ENCODE measurements at regions of chr17 and their contacts with region 1.

Region 1: GRCh38 chr17:44522883-44523671 is 19.9 kb upstream of the GPATCH8 start:
- DNase-seq: peak; percentile 84

Region 2: GRCh38 chr17:44176671-44177501 is 346.2 kb before region 1 on chr17:
- CTCF ChIA-PET with region 1: no interaction called
- POLR2A ChIA-PET with region 1: no interaction called
- DNase-seq: no peak

Region 3: GRCh38 chr17:44400226-44400847 is 122.7 kb before region 1 on chr17:
- CTCF ChIA-PET with region 1: interaction called, 17 read pairs
- POLR2A ChIA-PET with region 1: no interaction called
- DNase-seq: no peak

Region 4: DNA sequence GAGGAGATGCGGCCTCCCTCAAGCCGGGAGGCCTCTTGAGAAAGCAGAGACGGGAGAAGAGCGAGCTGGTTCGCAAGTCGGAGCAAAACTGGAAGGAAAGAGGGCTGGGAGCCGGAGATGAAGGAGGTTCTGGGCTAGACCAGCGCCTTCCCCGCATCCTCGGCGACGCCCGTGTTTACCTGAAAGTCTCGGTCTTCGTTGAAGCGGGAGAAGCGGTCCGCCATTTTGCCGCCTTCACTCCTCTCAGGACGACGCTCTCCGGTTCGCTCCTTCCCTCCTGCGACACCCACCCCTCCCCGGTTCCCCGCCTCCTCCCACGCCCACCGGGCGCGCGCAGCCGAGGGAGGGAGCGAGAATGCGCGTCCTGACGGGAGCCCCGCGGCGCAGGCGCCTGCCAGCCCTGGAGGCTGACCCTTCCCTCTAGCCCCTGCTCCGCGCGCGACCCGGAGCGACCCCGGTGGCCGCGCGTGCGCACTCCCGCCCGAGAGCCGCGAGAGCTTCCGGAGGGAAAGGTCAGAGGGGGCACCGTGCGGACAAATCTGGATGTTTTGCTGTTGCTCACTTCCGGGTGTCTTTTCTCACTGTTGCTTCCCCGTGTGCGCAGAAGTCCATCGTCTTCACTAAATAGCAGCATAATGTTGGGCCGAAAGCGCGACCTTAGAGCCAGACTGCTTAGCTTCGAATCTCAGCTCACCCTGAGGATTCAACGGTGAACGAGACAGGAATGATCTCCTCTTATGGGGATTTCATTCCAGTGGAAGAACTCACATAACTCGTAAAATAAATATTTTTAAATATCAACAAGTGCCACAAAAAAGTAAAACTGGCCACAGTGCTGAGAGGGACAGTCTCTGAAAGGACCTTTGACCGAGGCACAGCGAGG is 19.7 kb before region 1 on chr17 and contains the start of gene GPATCH8:
- CTCF ChIA-PET with region 1: interaction called, 3 read pairs
- POLR2A ChIA-PET with region 1: interaction called, 16 read pairs
- DNase-seq: peak; percentile 96

Region 5: DNA sequence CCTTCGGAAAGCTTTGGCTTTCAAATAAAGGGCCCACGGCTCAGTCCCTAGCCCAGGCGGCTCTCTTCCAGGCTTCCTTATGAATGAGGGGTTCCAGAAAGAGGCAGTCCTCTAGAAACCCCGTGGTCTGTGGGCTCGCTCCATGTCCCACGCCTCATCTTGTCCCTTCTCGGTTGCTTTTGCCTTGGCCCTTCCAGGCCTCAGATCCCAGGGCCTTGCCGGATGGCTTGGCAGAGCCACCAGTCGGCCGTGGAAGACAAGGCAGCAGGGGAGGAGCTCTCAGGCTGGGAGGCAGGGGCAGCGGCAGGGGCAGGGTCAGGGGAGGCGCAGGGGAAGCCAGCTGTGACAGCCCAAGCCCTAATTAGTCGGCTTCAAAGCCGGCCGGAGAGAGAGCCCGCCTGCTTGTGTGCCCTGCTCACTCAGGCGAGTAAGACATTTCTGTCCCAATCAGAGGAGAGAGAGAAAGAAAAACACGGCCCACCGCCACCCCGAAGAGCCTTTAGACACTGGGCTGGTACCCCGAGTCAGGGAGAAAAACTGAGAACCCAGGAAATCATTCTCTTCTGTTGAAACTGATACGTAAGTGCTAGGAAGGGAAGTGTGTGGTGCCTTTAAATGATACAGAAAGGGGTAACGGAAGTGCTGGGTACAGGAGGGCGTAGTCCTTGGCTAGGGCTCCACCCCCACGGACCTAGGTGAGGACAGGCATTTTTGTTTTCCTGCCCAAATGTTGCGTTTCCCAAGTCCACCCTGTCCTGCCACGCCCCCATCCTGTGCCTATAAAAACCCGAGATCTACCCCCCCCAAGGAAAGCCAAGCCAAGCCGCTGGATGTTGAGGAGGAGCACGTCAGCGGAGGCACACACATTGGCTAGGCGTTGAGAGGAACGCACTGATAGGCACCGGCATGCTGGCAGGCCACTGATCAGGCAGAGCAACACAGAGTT is 105.4 kb after region 1 on chr17:
- CTCF ChIA-PET with region 1: no interaction called
- POLR2A ChIA-PET with region 1: no interaction called
- DNase-seq: no peak

Measured in HEK293T (cell line).